CD4-positive, alpha-beta T cell (primary cell): ENCODE measurements at regions of chr5 and their contacts with region 1.

Region 1: DNA sequence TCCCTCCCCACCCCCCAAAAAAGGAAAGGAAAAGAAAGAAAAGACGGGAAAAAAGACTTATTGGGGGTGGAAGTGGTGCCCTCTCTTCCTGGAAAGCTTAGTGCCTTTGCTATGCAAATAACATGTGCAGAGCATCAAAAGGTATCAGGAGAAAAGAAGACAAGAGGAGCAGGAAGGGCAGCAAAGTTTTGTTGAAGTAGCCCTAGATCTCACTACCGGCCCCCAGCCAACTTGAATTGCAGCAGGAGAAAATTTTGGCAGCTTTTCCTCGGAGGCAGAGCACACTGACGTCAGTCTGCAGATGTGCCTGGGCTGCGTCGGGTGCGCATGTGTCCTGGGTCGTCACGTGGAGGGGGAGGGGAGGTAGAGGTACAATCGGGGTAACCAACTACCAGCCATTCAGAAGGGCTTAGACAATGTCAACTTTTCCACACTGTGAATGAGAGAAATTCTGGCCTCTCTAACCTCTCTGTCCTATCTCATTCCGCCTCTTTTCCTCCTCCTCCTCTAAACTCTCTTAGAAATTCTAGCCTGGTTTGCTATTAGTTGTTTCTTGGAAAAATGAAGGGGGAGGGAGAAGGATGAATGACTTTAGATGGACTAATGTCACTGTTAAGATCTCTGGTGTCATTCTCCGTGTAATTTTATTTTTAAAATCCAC is at the start of gene ADAMTS6:
- DNase-seq: peak; percentile 46 to 88 (median 72)
- ATAC-seq: peak; percentile 87
- H3K4me3 ChIP-seq: peak within 1 kb of the TSS; percentile 78
- H3K4me3 Mint-ChIP-seq: peak within 1 kb of the TSS; percentile 94
- H3K27ac ChIP-seq: peak within 1 kb of the TSS in 1 of 2 donors; percentile 57
- H3K27ac Mint-ChIP-seq: peak within 1 kb of the TSS; percentile 80
- H3K4me1 ChIP-seq: peaks cover 8% of the 10 kb centered on the region
- H3K4me1 Mint-ChIP-seq: peaks cover 14% of the 10 kb centered on the region
- H3K27me3 ChIP-seq: peaks cover 3 to 7% of the 10 kb centered on the region in 2 experiments
- H3K27me3 Mint-ChIP-seq: no peaks in the 10 kb centered on the region
- CTCF ChIP-seq: no peak
- total RNA-seq, gene ADAMTS6: 2.0 to 2.6 TPM

Region 2: GRCh38 chr5:64229163-64229774 is 1252.5 kb before region 1 on chr5:
- CTCF ChIA-PET with region 1: no interaction called
- POLR2A ChIA-PET with region 1: no interaction called
- intact Hi-C with region 1: loop called in 1 of 2 experiments (anchors 5 kb)
- DNase-seq: peak in 2 of 14 experiments; percentile 5 to 8
- ATAC-seq: no peak
- H3K4me3 ChIP-seq: no peak overlapping the region
- H3K4me3 Mint-ChIP-seq: no peak overlapping the region
- H3K27ac ChIP-seq: no peak overlapping the region
- H3K27ac Mint-ChIP-seq: no peak overlapping the region
- H3K4me1 ChIP-seq: no peaks in the 10 kb centered on the region
- H3K4me1 Mint-ChIP-seq: no peaks in the 10 kb centered on the region
- H3K27me3 ChIP-seq: no peaks in the 10 kb centered on the region
- H3K27me3 Mint-ChIP-seq: peaks cover 4% of the 10 kb centered on the region
- CTCF ChIP-seq: peak; percentile 62

Region 3: DNA sequence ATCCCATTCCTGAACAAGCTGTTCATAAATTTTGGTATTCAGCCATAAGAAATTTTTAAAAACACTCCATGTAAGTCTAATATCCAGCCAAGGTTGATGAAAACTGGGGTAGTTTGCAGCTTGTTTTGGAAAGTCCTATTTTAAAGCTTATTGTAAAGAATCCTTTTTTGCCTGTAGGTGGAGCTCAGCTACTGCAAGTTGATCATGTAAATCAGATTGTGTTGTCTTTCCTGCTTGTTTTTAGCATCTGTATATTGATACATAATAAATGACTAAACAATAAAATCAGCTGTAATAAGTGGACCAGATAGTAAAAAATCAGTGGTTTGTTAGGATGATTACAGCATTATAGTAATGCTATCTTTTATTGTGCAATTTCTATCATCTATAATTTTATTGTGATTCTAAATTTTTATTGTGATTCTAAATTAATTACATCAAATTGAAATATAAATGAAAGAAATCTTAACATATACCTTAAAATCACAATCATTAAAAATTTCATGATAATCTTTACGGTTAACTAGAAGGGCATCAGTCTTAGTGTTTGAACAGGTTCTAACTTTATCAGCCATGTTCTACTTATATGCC is 670.6 kb before region 1 on chr5:
- CTCF ChIA-PET with region 1: interaction called, 11 read pairs
- POLR2A ChIA-PET with region 1: interaction called, 12 read pairs
- intact Hi-C with region 1: loop called (anchors 1 to 2 kb)
- DNase-seq: peak in 4 of 14 experiments; percentile 11 to 60 (median 54)
- ATAC-seq: peak; percentile 51
- H3K4me3 ChIP-seq: no peak overlapping the region
- H3K4me3 Mint-ChIP-seq: no peak overlapping the region
- H3K27ac ChIP-seq: no peak overlapping the region
- H3K27ac Mint-ChIP-seq: no peak overlapping the region
- H3K4me1 ChIP-seq: no peaks in the 10 kb centered on the region
- H3K4me1 Mint-ChIP-seq: no peaks in the 10 kb centered on the region
- H3K27me3 ChIP-seq: no peaks in the 10 kb centered on the region
- H3K27me3 Mint-ChIP-seq: no peaks in the 10 kb centered on the region
- CTCF ChIP-seq: peak; percentile 54

Region 4: GRCh38 chr5:65035211-65036206 is 446.3 kb before region 1 on chr5:
- CTCF ChIA-PET with region 1: no interaction called
- POLR2A ChIA-PET with region 1: interaction called, 3 read pairs
- intact Hi-C with region 1: loop called in 1 of 2 experiments (anchors 2 kb)
- DNase-seq: peak; percentile 49 to 94 (median 72)
- ATAC-seq: peak; percentile 77
- H3K4me3 ChIP-seq: peak overlapping the region; percentile 71
- H3K4me3 Mint-ChIP-seq: peak overlapping the region; percentile 83
- H3K27ac ChIP-seq: peak overlapping the region; percentile 86 to 91
- H3K27ac Mint-ChIP-seq: peak overlapping the region; percentile 83
- H3K4me1 ChIP-seq: peaks cover 30% of the 10 kb centered on the region
- H3K4me1 Mint-ChIP-seq: peaks cover 22% of the 10 kb centered on the region
- H3K27me3 ChIP-seq: no peaks in the 10 kb centered on the region
- H3K27me3 Mint-ChIP-seq: no peaks in the 10 kb centered on the region
- CTCF ChIP-seq: no peak

Region 5: GRCh38 chr5:65102828-65103711 is 378.7 kb before region 1 on chr5:
- CTCF ChIA-PET with region 1: interaction called, 10 read pairs
- POLR2A ChIA-PET with region 1: interaction called, 5 read pairs
- intact Hi-C with region 1: loop called (anchors 2 kb)
- DNase-seq: peak; percentile 12 to 82 (median 37)
- ATAC-seq: peak; percentile 72
- H3K4me3 ChIP-seq: peak overlapping the region; percentile 65
- H3K4me3 Mint-ChIP-seq: peak overlapping the region; percentile 89
- H3K27ac ChIP-seq: peak overlapping the region; percentile 29 to 50
- H3K27ac Mint-ChIP-seq: peak overlapping the region; percentile 80
- H3K4me1 ChIP-seq: peaks cover 15% of the 10 kb centered on the region
- H3K4me1 Mint-ChIP-seq: peaks cover 44% of the 10 kb centered on the region
- H3K27me3 ChIP-seq: no peaks in the 10 kb centered on the region
- H3K27me3 Mint-ChIP-seq: no peaks in the 10 kb centered on the region
- CTCF ChIP-seq: peak; percentile 17